Gastrocnemius medialis (tissue), 4 donors: ENCODE measurements at regions of chr22 and their contacts with region 1.

Region 1: DNA sequence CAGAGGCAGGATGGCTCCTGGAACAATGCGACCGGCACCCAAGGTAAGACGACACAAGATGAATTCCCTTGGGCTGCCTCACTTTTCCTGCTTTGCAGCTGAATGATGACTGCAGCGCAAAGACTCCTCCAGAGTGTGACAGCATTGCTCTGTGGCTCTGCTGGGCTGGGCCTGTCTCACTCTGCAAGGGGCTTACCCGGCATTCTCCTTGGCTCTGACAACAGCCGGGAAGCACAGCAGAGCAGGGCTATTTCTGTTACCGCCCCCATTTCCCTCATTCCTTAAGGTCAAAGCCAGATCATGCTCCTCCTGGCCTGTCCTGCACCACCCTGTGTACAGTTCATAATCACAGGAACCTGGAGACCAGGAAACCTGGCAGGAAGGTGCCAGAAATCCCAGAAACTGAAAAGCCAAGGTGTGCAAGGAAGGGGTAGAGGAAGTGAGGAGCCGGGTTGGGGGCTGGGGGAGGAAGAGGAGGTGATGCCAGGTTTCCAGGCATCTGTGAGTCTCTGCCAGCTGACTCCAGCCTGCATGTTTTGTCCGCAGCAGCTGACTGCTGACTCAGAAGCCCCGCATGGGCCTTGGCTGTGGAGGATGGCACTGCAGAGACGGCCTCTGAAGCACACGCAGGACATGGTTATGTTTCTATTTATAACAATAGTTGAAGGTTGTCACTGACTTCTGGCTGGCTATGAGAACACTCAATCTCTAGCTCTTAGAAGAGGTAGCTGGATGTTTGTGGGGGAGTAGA is 113.6 kb downstream of the MICAL3 start:
- DNase-seq: peak; percentile 94
- ATAC-seq: peak; percentile 76 to 80
- H3K4me3 ChIP-seq: peak overlapping the region in 3 of 4 donors; percentile 6 to 31 (median 10)
- H3K27ac ChIP-seq: peak overlapping the region; percentile 89 to 97 (median 94)
- H3K4me1 ChIP-seq: peaks cover 75 to 84% of the 10 kb centered on the region in 2 donors
- H3K27me3 ChIP-seq: no peaks in the 10 kb centered on the region
- CTCF ChIP-seq: peak in 4 of 5 experiments; percentile 8 to 54 (median 33)
- POLR2A ChIP-seq: peak; percentile 43 to 75

Region 2: GRCh38 chr22:17785185-17786184 is 125.3 kb before region 1 on chr22:
- in situ Hi-C with region 1: no loop called
- intact Hi-C with region 1: no loop called
- DNase-seq: peak; percentile 63 to 85
- ATAC-seq: peak; percentile 34 to 40
- H3K4me3 ChIP-seq: no peak overlapping the region
- H3K27ac ChIP-seq: peak overlapping the region; percentile 85 to 94 (median 90)
- H3K4me1 ChIP-seq: peaks cover 22 to 29% of the 10 kb centered on the region in 2 donors
- H3K27me3 ChIP-seq: no peaks in the 10 kb centered on the region
- CTCF ChIP-seq: peak; percentile 50 to 85 (median 68)
- POLR2A ChIP-seq: no peak

Region 3: DNA sequence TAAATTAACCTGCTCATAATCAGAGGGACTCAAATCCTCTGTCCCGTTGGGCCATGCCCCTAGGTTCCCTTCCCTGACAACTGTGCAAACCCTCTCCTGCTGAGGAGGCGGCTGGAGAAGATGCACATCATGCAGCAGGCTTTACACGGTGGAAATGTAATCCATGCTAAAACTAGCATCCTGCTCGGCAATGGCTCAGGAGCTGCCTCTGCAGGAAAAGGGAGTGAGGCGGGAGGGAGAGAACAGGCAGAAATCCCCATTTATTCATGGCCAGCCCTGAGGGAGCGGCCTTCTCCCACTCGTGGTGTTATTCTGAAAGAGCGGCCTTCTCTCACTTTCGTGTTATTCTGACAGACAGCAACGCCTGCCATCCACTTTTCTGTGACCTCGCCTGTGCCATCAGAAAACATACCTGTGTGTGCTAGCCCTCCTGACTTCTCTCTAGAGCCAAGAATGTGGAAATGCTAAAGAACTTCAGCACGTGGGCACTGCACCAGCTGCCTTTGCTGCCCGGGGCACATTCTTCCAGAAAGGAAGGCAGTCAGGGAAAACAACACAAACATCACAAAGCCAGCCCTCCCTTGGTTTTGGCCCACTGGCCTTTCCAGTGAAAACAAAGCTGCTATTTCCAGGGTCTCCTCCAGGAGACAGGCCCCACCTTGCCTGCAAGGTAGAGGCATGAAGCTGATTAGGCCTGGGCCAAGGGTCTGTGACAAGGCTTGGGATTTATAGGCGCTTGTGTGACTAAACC is 73.6 kb before region 1 on chr22:
- in situ Hi-C with region 1: no loop called
- intact Hi-C with region 1: no loop called
- DNase-seq: peak in 1 of 2 donors; percentile 30
- ATAC-seq: peak; percentile 9 to 25
- H3K4me3 ChIP-seq: no peak overlapping the region
- H3K27ac ChIP-seq: peak overlapping the region; percentile 74 to 88 (median 81)
- H3K4me1 ChIP-seq: peaks cover 31 to 52% of the 10 kb centered on the region in 2 donors
- H3K27me3 ChIP-seq: no peaks in the 10 kb centered on the region
- CTCF ChIP-seq: no peak
- POLR2A ChIP-seq: no peak

Region 4: DNA sequence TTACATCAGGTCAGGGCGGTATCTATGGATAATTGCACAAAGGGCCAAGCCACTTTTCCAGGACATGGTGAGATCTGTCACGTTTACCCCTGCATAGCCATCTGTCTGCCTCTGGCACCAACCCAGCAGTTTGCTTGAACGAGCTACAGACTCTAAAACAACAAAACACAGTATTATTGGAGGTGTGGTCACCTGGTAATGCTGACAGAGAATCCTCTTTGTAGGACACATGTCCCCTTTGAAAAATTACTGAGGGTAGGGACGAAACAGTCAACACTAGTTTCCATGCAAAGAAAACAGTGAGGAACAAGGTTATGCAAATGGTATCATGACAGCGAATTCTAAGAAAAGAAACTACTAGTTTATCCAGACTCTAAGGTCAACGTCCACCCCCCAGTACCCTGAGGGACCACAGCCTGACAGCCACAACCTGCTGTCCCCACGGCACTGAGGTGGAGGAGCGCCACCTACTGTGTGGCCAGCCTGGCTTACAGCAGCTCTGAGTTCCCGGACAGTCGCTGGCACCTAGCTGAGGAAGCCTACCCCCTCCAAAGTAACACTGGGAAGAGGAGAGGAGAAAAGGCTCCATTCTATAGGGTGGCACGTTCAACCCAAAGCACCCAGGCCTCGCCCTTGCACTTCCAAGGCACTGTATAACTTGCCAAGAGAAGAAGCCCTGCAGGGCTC is 19.1 kb before region 1 on chr22:
- in situ Hi-C with region 1: no loop called
- intact Hi-C with region 1: loop called (anchors 1 kb)
- DNase-seq: peak; percentile 73 to 85
- ATAC-seq: peak; percentile 37 to 49
- H3K4me3 ChIP-seq: no peak overlapping the region
- H3K27ac ChIP-seq: peak overlapping the region; percentile 90 to 95 (median 94)
- H3K4me1 ChIP-seq: peaks cover 41 to 45% of the 10 kb centered on the region in 2 donors
- H3K27me3 ChIP-seq: no peaks in the 10 kb centered on the region
- CTCF ChIP-seq: peak; percentile 79 to 89 (median 84)
- POLR2A ChIP-seq: no peak

Region 5: DNA sequence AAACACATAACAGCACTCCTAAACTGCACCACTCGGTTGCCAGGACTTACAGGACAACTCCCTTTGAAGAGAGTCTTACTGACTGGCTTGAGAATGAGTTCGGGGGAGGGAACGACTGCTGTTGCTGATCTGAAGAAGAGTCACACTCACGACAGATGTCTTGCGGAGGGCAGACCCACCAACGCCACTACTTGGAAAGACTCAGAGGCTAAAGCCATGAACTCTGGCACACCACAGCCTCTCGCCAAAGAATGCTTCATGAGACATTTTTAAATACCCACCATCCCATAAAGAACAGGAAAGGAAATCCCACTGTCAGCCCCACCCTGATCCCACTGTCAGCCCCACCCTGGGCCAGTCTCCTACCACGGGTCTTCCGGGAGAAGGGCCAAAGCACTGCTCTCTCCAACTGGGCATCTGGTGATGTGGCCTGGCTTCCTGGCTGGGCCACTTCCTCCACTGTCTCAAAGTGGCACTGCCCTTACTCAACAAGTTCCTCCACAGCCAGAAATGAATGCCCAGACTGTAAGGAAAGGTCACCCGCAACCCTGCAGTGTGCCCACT is 40.0 kb after region 1 on chr22:
- in situ Hi-C with region 1: no loop called
- intact Hi-C with region 1: loop called (anchors 2 kb)
- DNase-seq: peak; percentile 65 to 90
- ATAC-seq: peak; percentile 62 to 85
- H3K4me3 ChIP-seq: no peak overlapping the region
- H3K27ac ChIP-seq: peak overlapping the region; percentile 78 to 81 (median 79)
- H3K4me1 ChIP-seq: peaks cover 44 to 52% of the 10 kb centered on the region in 2 donors
- H3K27me3 ChIP-seq: no peaks in the 10 kb centered on the region
- CTCF ChIP-seq: no peak
- POLR2A ChIP-seq: no peak

Region 6: GRCh38 chr22:18001040-18001893 is 90.5 kb after region 1 on chr22:
- in situ Hi-C with region 1: no loop called
- intact Hi-C with region 1: loop called (anchors 2 kb)
- DNase-seq: peak; percentile 84 to 92
- ATAC-seq: peak; percentile 95 to 96
- H3K4me3 ChIP-seq: peak overlapping the region; percentile 62 to 89 (median 76)
- H3K27ac ChIP-seq: peak overlapping the region; percentile 85 to 95 (median 92)
- H3K4me1 ChIP-seq: peaks cover 15 to 24% of the 10 kb centered on the region in 2 donors
- H3K27me3 ChIP-seq: no peaks in the 10 kb centered on the region
- CTCF ChIP-seq: peak; percentile 46 to 82 (median 79)
- POLR2A ChIP-seq: peak; percentile 84 to 89

Region 7: DNA sequence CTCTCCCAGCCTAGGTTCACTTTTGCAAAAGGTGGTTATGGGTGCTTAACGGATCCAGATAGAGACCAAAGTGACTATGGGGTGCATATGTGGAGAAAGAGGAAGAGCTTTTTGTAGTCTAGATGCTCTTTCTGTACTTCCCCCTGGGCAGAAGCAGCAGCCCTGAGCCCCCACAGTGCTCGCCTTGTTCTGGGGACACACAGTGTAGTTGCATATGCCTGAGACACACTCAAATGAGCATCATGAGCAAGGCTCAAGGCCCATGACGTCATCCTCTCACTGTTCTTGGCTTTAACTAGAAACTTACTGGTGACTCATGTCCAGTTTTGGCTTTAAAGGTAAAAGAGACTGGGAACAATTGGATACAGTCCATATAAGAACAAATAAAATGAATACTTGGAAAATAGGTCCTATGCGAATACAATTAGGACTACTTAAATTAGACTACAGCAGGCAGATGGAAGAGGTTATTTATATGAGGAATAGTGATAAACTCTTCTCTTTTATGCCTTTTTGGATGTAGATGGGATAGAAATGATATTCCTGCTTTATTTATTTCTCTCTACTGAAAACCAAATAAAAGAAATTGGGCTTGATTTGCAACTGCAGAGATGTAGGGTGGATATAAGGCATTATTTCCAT is 147.0 kb after region 1 on chr22:
- in situ Hi-C with region 1: loop called in 1 of 4 experiments (anchors 25 kb)
- intact Hi-C with region 1: no loop called
- DNase-seq: peak; percentile 83 to 86
- ATAC-seq: peak; percentile 79 to 88
- H3K4me3 ChIP-seq: no peak overlapping the region
- H3K27ac ChIP-seq: peak overlapping the region; percentile 84 to 94 (median 90)
- H3K4me1 ChIP-seq: peaks cover 33 to 38% of the 10 kb centered on the region in 2 donors
- H3K27me3 ChIP-seq: no peaks in the 10 kb centered on the region
- CTCF ChIP-seq: no peak
- POLR2A ChIP-seq: peak; percentile 63 to 81

Region 8: GRCh38 chr22:18077639-18078328 is 167.0 kb after region 1 on chr22 and contains the start of gene PEX26:
- in situ Hi-C with region 1: loop called in 2 of 4 experiments (anchors 10 to 25 kb)
- intact Hi-C with region 1: loop called (anchors 2 kb)
- DNase-seq: peak; percentile 95 to 96
- ATAC-seq: peak; percentile 89 to 90
- H3K4me3 ChIP-seq: peak within 1 kb of the TSS; percentile 72 to 98 (median 86)
- H3K27ac ChIP-seq: peak within 1 kb of the TSS; percentile 82 to 92 (median 90)
- H3K4me1 ChIP-seq: peaks cover 26 to 36% of the 10 kb centered on the region in 2 donors
- H3K27me3 ChIP-seq: no peaks in the 10 kb centered on the region
- CTCF ChIP-seq: no peak
- POLR2A ChIP-seq: peak; percentile 87 to 88
- total RNA-seq, gene PEX26: 16.4 to 24.7 (median 16.8) TPM